Lower leg skin (tissue), 4 donors: ENCODE measurements at regions of chr5 and their contacts with region 1.

Region 1: DNA sequence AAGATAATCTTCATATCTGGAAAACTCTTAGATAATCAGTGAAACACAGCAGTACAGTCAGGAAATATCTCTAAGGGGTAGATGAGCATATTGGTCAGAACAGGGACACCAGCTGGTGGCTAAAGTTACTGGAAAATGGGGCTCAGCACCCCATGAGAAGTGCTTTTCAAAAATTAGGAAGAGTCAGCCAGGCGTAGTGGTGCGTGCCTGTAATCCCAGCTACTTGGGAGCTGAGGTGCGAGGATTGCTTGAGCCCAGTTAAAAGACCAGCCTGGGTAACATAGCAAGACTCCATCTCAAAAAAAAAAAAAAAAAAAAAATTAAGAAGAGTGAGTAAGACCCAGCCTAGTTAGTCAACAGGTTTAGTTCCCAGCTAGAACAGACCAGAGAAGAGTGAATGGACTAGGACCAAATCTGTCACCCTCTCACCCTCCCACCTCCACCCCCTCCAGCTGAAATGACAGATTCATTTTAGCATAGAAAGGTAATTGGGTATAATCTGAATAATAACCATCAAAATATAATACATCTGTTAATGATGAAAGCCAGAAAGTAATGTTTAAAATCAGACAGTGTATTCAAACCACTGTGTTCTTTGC is 120.9 kb downstream of the CDC42SE2 start:
- DNase-seq: no peak
- H3K4me3 ChIP-seq: no peak overlapping the region
- CTCF ChIP-seq: no peak
- POLR2A ChIP-seq: no peak

Region 2: DNA sequence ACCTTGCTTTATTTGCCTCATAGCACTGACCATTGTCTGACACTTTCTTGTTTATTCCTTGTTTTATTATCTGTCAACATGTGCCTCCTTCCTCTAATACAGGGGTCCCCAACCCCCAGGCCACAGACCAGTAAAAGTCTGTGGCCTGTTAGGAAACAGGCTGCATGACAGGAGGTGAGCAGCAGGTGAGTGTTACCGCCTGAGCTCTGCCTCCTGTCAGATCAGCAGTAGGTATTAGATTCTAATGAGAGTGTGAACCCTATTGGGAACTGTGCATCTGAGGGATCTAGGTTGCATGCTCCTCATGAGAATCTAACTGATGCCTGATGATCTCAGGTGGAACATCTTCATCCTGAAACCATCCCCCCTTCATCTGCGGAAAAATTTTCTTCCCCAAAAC is 447.7 kb before region 1 on chr5:
- intact Hi-C with region 1: no loop called
- DNase-seq: no peak
- H3K4me3 ChIP-seq: no peak overlapping the region
- CTCF ChIP-seq: no peak
- POLR2A ChIP-seq: no peak

Region 3: GRCh38 chr5:131156957-131157356 is 227.8 kb before region 1 on chr5:
- intact Hi-C with region 1: loop called (anchors 1 kb)
- DNase-seq: no peak
- H3K4me3 ChIP-seq: no peak overlapping the region
- CTCF ChIP-seq: no peak
- POLR2A ChIP-seq: no peak